ENCODE measurements at regions of chr1 and their contacts with region 1.

Region 1: DNA sequence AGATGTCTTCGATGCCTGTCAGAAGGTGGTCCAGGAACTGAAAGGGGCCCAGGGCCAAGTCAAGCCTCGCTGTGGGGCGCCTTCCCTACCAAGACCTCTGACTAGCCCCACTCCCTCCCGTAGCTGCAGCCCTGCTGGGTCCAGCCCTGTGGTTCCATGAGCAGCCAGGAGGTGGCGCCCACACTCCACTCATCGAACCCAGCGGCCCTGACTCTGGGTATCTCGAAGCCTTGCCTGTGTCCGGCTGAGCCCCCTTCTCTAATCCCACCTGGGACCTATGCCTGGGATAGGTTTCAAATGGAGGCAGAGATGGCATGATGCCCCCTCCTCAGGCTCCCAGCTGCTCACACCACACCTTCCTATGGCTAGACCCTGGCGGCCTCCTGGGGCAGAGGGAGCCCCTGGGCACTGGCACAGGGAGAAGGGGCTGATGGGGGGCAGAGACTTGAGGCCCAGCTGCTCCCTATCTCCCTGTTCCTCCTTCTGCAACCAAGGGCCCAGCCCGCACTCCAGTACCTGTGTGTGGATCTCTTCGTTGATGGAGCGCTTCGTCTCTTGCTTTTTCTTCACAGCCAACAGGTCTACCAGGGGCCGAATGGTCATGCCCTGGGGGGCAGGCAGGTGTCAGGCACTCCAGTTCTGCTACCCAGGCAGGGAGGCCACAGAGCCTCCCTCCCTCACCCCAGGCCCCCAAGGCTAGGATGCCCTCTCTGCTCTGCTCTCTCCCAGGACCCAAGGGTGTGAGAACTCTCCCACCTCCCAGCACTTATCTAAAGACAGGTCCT is 52.0 kb downstream of the SLC9A1 start:
- DNase-seq: peak; percentile 74
- H3K27ac ChIP-seq: peak overlapping the region; percentile 96
- CTCF ChIP-seq: peak; percentile 94

Region 2: GRCh38 chr1:27284425-27285273 is 181.8 kb after region 1 on chr1:
- CTCF ChIA-PET with region 1: interaction called, 12 read pairs
- POLR2A ChIA-PET with region 1: no interaction called
- DNase-seq: peak; percentile 82
- H3K27ac ChIP-seq: no peak overlapping the region
- CTCF ChIP-seq: peak; percentile 88

Measured in RWPE1 (cell line).